Right ventricle myocardium inferior (tissue), 1 donor: ENCODE measurements at regions of chr1 and their contacts with region 1.

Region 1: DNA sequence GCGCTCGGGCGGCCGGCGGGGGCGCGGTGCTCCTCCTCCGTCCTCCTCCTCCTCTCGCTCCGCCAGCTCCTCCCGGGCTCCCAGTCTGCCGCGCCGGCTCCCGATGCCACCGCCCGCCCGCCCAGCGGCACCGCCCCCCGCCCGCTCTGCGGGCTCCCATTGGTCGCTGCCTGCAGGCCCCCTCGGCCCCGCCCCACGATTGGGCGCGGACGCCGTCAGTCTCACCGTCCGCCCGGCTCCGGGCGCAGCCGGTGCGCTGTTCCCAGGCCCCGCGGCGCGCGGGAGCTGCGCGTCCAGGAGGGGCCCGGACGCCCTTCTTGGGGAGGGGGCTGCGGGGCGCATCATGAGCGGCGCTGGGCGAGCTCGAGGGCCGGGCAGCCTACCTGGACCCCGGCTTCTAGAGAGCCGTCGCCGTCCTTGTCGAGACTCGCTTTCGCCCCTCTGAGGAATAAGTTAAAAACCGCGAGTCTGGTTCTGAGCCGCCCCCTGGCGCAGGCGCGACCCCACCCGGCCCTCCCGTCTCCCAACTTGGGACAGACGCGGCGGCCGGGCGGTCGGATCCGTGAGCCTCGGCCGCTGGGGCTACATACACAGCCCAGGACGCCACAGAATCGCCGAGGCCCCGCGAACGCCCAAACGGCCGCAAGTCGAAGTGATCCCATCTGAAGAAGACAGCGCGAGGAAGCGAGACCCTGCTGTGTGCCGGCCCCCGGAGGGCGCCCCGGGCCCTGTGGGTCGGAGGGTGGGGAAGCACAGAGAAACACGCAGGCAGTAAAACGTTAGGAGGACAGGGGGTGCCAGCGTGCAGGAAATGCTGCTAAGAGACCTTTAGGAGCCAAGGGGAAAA is at the start of gene SIPA1L2:
- DNase-seq: peak; percentile 96
- ATAC-seq: peak; percentile 97
- total RNA-seq, gene SIPA1L2: 120 TPM

Region 2: DNA sequence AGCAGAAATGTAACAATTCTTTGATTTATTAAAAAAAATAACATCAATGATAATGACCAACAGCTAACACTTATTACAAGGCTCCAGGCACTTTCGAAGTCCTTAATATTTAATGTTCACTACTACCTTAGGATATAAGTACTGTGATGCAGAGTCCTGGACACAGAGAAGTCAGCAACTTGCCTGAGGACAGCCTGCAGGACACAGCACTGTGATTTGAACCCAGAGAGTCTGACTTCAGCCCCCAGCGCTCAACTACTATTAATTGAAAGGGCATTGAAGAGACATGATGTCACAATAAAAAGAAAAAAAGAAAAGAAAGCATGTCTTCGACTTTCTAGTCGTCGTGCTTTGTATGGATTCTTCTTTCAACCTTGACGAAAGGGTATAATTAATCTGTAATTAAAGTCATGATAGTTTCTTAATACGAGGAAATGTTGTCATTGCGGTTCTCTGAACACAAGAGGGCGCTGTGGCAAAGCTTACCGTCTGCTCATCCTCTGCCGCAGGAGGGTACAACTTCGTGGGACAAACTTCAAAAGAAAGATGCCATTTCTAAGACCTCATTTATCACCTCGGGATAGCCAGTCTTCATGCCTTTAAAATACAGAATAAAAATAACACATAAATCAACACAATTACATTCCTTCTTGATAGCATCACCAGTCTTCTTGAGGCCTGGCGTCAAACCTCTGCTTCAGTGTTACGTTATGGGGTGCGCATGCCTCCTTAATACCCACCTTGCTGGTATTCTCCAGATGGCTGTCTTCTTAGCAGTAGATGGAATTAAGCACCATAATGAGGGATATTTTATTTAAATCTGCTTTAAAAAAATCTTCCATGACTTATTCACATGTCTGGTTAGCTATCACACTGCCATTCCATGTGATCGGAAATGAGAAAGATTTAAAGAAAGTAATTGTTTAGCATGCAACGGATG is 763.6 kb before region 1 on chr1:
- intact Hi-C with region 1: loop called (anchors 2 kb)
- DNase-seq: no peak
- ATAC-seq: no peak

Region 3: DNA sequence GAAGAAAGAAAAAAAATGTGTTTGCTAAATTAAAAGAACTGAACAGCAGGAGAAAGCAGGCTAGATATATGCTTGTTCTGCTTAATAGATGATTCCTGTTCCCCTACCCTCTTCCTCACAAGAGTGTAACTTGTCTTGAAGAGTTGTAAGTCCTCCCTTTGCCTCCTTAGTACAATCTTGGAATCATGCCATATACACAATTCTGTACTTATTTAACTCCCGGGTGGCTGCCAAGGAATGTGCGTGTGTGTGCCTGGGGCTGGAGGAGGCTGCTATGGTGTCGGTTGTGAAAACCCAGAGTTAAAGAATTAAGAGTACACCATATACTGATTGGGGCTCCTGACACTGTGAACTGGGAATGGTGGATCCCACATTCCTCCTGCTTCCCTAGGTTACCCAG is 194.5 kb before region 1 on chr1:
- intact Hi-C with region 1: loop called (anchors 5 kb)
- DNase-seq: no peak
- ATAC-seq: peak; percentile 42

Region 4: DNA sequence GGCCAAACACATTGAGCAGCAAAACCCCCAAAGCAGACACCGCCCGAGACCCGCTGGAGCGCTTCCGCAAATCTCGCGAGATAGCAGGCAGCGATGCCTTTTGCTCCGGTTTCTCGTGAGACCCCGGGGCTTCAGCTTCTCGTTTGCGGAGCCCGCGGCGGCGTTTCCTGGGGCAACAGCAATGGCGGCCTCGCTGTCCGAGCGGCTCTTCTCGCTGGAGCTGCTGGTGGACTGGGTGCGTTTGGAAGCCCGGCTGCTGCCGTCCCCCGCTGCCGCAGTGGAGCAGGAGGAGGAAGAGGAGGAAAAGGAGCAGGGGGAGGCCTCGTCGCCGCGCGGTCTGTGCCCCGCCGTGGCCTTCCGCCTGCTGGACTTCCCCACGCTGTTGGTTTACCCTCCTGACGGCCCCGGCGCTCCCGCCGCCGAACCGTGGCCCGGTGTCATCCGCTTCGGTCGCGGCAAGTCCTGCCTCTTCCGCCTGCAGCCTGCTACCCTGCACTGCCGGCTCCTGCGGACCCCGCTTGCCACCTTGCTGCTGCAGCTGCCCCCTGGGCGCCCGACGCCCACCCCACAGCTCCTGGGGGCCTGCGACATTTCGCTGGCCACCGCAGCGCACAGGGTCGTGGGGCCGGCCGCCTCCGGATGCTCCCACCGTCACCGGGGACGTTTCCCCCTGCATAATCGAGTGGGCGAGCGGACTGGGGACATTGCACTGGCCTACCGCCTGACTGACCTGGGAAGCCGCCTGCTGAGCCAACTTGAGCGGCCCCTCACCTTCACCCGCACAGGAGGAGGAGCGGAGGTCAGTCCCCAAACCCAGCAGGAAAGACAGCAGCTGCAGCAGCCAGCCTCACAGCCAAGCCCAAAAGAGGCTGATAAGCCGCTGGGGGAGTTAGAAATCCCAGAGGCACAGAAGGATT is 175.3 kb after region 1 on chr1 and contains the start of gene MAP10:
- intact Hi-C with region 1: loop called (anchors 5 kb)
- DNase-seq: peak; percentile 87
- ATAC-seq: peak; percentile 89
- total RNA-seq, gene MAP10: 3.3 TPM

Region 5: GRCh38 chr1:233172227-233172626 is 542.0 kb after region 1 on chr1:
- intact Hi-C with region 1: loop called (anchors 5 kb)
- DNase-seq: no peak
- ATAC-seq: no peak